Natural killer cell (primary cell): ENCODE measurements at regions of chr11 and their contacts with region 1.

Region 1: GRCh38 chr11:112983887-112984286 is 22.7 kb downstream of the NCAM1 start:
- DNase-seq: no peak
- ATAC-seq: no peak
- H3K4me3 ChIP-seq: no peak overlapping the region
- H3K4me3 Mint-ChIP-seq: no peak overlapping the region
- H3K27ac ChIP-seq: no peak overlapping the region
- H3K27ac Mint-ChIP-seq: no peak overlapping the region
- H3K4me1 ChIP-seq: no peaks in the 10 kb centered on the region
- H3K4me1 Mint-ChIP-seq: peaks cover 27 to 32% of the 10 kb centered on the region in 2 donors
- H3K27me3 ChIP-seq: no peaks in the 10 kb centered on the region
- H3K27me3 Mint-ChIP-seq: no peaks in the 10 kb centered on the region
- CTCF ChIP-seq: no peak

Region 2: DNA sequence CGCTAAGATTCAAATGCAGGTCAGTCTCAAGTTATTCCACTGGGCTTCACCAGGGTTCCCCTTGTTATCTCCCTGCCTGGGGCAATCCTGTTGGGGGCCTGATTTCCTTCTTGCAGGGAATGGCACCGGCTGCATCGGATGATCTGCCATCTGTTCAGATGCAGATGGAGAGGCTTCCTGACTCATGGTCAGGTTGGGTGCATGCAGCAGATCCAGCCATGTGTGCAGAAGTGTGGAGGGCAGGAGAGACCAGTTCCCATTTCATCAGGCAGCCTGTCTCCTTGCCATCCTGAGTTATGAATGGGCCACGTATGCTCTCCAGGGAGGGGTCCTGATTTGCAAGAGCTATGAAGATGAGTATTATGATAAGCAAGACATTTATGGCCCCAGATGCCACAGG is 562.0 kb before region 1 on chr11:
- intact Hi-C with region 1: no loop called
- DNase-seq: no peak
- ATAC-seq: no peak
- H3K4me3 ChIP-seq: no peak overlapping the region
- H3K4me3 Mint-ChIP-seq: no peak overlapping the region
- H3K27ac ChIP-seq: no peak overlapping the region
- H3K27ac Mint-ChIP-seq: no peak overlapping the region
- H3K4me1 ChIP-seq: no peaks in the 10 kb centered on the region
- H3K4me1 Mint-ChIP-seq: peaks cover 0 to 5% of the 10 kb centered on the region in 2 donors
- H3K27me3 ChIP-seq: no peaks in the 10 kb centered on the region
- H3K27me3 Mint-ChIP-seq: peaks cover 15% of the 10 kb centered on the region in 2 donors
- CTCF ChIP-seq: no peak

Region 3: GRCh38 chr11:112748713-112749543 is 235.0 kb before region 1 on chr11:
- intact Hi-C with region 1: no loop called
- DNase-seq: no peak
- ATAC-seq: no peak
- H3K4me3 ChIP-seq: no peak overlapping the region
- H3K4me3 Mint-ChIP-seq: no peak overlapping the region
- H3K27ac ChIP-seq: no peak overlapping the region
- H3K27ac Mint-ChIP-seq: no peak overlapping the region
- H3K4me1 ChIP-seq: no peaks in the 10 kb centered on the region
- H3K4me1 Mint-ChIP-seq: peaks cover 6 to 7% of the 10 kb centered on the region in 2 donors
- H3K27me3 ChIP-seq: no peaks in the 10 kb centered on the region
- H3K27me3 Mint-ChIP-seq: peaks cover 26 to 60% of the 10 kb centered on the region in 2 donors
- CTCF ChIP-seq: no peak

Region 4: GRCh38 chr11:113014262-113015097 is 30.6 kb after region 1 on chr11:
- intact Hi-C with region 1: loop called (anchors 5 kb)
- DNase-seq: no peak
- ATAC-seq: peak in 2 of 3 donors; percentile 57 to 65
- H3K4me3 ChIP-seq: no peak overlapping the region
- H3K4me3 Mint-ChIP-seq: no peak overlapping the region
- H3K27ac ChIP-seq: no peak overlapping the region
- H3K27ac Mint-ChIP-seq: no peak overlapping the region
- H3K4me1 ChIP-seq: peaks cover 12% of the 10 kb centered on the region
- H3K4me1 Mint-ChIP-seq: peaks cover 44 to 53% of the 10 kb centered on the region in 2 donors
- H3K27me3 ChIP-seq: no peaks in the 10 kb centered on the region
- H3K27me3 Mint-ChIP-seq: no peaks in the 10 kb centered on the region
- CTCF ChIP-seq: no peak